ENCODE measurements at regions of chr16 and their contacts with region 1.

Region 1: DNA sequence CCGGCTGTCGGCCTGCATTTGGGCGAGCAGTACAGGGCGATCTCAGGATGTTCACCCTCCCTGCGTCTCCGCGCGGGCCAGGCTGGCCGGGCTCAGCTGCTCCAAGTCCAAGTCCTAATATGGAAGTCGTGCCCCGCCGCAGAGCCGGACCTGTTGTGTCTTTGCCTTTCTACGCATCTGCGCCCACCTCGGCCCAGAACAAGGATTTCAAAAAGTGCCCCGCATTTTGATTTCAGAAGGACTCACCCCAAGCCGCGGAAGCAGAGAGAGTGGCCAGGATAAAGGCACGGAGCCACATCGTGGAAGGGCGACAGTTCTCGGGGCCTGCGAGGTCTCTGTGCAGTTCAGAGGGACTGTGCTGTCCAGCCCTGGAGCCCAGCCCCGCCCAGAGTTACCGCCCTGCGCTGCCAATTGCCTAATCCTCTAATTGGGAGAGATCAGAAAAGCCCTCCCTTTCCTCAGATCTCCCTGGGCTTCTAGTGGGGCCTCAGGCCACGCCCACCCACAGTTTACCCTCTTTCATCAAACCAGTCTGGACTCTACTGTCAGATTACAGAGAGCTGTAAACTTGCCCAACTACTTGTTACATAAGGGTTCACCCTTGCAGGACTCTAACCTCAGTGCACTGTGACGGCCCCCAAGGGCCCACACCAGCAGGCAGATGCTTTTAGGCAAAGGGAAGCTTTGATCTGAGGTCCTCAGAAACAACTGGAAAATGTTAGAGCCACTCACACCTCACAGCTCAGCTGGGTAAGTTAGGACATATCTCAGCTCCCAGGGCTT is at the start of gene CES1:
- DNase-seq: peak; percentile 83 to 96 (median 94)
- ATAC-seq: peak; percentile 83 to 93
- H3K4me3 ChIP-seq: no peak within 1 kb of the TSS
- H3K27ac ChIP-seq: no peak within 1 kb of the TSS
- H3K4me1 ChIP-seq: no peaks in the 10 kb centered on the region
- H3K27me3 ChIP-seq: no peaks in the 10 kb centered on the region
- total RNA-seq, gene CES1: 17.4 to 81.4 (median 60.6) TPM

Region 2: GRCh38 chr16:55760310-55761001 is 72.5 kb before region 1 on chr16:
- intact Hi-C with region 1: loop called in 2 of 4 experiments (anchors 2 to 5 kb)
- DNase-seq: peak; percentile 35 to 90 (median 89)
- ATAC-seq: peak; percentile 70 to 84
- H3K4me3 ChIP-seq: no peak overlapping the region
- H3K27ac ChIP-seq: no peak overlapping the region
- H3K4me1 ChIP-seq: peaks cover 4% of the 10 kb centered on the region
- H3K27me3 ChIP-seq: no peaks in the 10 kb centered on the region